ENCODE measurements at regions of chr19 and their contacts with region 1.

Region 1: DNA sequence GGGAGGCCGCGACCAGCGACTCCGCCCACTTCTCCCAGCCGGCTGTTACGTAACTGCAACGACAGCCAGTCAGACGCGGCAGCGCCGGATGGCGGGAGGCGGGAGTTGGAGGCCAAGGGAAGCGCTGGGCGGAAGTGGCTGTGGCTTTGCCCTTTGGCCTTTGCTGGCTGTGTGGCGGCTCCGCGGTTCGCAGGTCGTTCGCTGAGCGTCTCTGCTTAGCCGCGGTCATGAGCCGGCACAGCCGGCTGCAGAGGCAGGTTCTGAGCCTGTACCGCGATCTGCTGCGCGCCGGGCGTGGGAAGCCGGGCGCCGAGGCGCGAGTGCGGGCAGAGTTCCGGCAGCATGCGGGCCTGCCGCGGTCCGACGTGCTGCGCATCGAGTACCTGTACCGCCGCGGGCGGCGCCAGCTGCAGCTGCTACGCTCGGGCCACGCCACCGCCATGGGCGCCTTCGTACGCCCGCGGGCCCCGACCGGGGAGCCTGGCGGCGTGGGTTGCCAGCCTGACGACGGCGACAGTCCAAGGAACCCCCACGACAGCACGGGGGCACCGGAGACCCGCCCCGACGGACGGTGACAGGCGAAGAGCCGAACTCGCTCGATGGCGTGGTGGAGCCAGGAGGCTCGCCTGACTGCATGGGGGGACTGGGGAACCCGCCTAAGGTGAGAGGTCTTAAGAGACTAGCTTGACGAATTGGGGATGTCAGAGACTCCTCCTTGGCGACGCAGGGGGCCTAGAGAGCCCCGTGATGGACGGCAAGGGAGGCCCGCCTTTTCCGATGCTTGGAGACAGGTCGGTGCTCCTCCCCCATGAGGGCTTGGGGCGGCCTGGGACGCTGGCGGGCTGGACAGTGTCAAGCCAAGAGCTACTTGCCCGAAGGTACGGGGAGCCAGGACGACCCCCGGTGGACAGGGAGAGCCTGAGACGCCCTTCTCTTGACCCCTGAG is at the start of gene SDHAF1:
- DNase-seq: peak; percentile 88
- H3K4me3 ChIP-seq: peak within 1 kb of the TSS; percentile 57 to 81 (median 69)
- H3K27ac ChIP-seq: peak within 1 kb of the TSS; percentile 20
- H3K4me1 ChIP-seq: peaks cover 22% of the 10 kb centered on the region
- H3K27me3 ChIP-seq: no peaks in the 10 kb centered on the region
- CTCF ChIP-seq: no peak
- total RNA-seq, gene SDHAF1: 10.8 to 14.5 TPM

Region 2: DNA sequence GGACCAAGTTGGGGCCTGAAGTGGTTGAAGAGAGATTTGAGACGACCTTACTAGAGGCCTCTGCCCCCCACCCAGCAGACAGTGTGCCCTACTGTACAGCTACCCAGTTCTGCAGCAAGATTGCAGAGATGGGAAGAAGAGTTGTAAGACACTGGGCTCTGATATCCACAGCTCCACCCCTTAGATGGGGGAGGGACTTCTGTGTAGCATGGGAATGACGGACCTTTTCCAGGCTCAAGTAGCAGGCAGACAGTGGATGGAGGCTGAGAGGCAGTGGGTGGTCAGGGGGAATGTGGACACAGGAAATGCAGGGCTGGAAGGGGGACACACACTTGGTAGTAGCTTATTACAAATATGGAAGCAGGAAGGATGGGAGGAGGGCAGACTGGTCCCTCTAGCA is 46.2 kb before region 1 on chr19:
- CTCF ChIA-PET with region 1: interaction called, 15 read pairs
- dilution Hi-C with region 1: no loop called
- in situ Hi-C with region 1: no loop called
- intact Hi-C with region 1: no loop called
- DNase-seq: no peak
- H3K4me3 ChIP-seq: no peak overlapping the region
- H3K27ac ChIP-seq: no peak overlapping the region
- H3K4me1 ChIP-seq: no peaks in the 10 kb centered on the region
- H3K27me3 ChIP-seq: no peaks in the 10 kb centered on the region
- CTCF ChIP-seq: no peak

Region 3: DNA sequence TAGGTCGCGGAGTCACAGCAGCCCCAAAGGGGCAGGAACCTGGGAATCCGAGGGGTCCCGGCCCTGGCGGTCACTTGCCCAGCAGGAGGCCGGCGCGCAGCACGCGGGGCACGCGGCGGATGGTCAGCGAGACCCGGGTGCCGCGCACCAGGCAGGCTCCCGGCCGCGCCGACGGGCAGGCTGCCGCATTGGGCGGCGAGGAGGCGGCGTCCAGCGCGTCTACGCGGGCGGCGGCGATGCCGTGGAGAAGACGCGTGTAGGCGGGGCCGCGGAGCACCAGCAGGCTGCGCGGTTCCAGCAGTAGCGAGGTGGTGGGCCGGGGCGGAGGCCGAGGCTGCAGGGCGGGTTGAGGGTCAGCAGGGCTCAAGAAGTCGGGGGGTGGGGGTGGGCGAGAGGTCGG is 13.9 kb after region 1 on chr19:
- CTCF ChIA-PET with region 1: no interaction called
- dilution Hi-C with region 1: no loop called
- in situ Hi-C with region 1: no loop called
- intact Hi-C with region 1: loop called (anchors 2 kb)
- DNase-seq: no peak
- H3K4me3 ChIP-seq: peak overlapping the region; percentile 33 to 44 (median 33)
- H3K27ac ChIP-seq: no peak overlapping the region
- H3K4me1 ChIP-seq: peaks cover 10% of the 10 kb centered on the region
- H3K27me3 ChIP-seq: no peaks in the 10 kb centered on the region
- CTCF ChIP-seq: peak in 1 of 2 donors; percentile 7

Region 4: GRCh38 chr19:36032251-36033104 is 37.2 kb after region 1 on chr19 and contains the start of gene CLIP3:
- CTCF ChIA-PET with region 1: no interaction called
- dilution Hi-C with region 1: no loop called
- in situ Hi-C with region 1: no loop called
- intact Hi-C with region 1: no loop called
- DNase-seq: no peak
- H3K4me3 ChIP-seq: peak within 1 kb of the TSS in 1 of 3 experiments; percentile 43
- H3K27ac ChIP-seq: no peak within 1 kb of the TSS
- H3K4me1 ChIP-seq: no peaks in the 10 kb centered on the region
- H3K27me3 ChIP-seq: no peaks in the 10 kb centered on the region
- CTCF ChIP-seq: no peak
- total RNA-seq, gene CLIP3: 3.9 to 5.7 TPM

Measured in mammary epithelial cell (primary cell).